CD8-positive, alpha-beta T cell (primary cell): ENCODE measurements at regions of chr18 and their contacts with region 1.

Region 1: GRCh38 chr18:52747869-52748268 is 407.9 kb downstream of the DCC start:
- DNase-seq: no peak
- ATAC-seq: no peak
- H3K4me3 ChIP-seq: no peak overlapping the region
- H3K4me3 Mint-ChIP-seq: no peak overlapping the region
- H3K27ac ChIP-seq: no peak overlapping the region
- H3K27ac Mint-ChIP-seq: no peak overlapping the region
- H3K4me1 ChIP-seq: no peaks in the 10 kb centered on the region
- H3K4me1 Mint-ChIP-seq: no peaks in the 10 kb centered on the region
- H3K27me3 ChIP-seq: no peaks in the 10 kb centered on the region
- H3K27me3 Mint-ChIP-seq: no peaks in the 10 kb centered on the region
- CTCF ChIP-seq: no peak

Region 2: DNA sequence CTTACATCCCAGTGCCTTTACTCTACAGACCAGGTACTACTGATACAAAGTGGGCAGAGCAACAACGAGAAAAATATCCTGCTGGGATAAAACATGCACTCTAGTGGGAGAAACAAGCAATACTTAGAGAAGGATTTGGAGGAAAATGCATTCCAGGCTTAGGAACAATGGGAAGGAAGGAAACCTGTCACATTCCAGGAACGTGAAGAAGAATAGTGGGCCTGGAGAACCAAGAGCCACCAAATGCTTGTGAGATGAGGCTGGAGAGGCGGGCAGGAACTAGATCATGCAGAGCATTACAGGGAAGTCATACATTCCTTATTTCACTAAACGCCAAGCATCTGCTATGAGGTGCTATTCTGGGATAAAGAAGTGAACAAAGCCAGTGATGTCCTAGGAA is 65.6 kb before region 1 on chr18:
- CTCF ChIA-PET with region 1: no interaction called
- POLR2A ChIA-PET with region 1: no interaction called
- intact Hi-C with region 1: loop called in 1 of 2 experiments (anchors 10 kb)
- DNase-seq: no peak
- ATAC-seq: no peak
- H3K4me3 ChIP-seq: no peak overlapping the region
- H3K4me3 Mint-ChIP-seq: no peak overlapping the region
- H3K27ac ChIP-seq: no peak overlapping the region
- H3K27ac Mint-ChIP-seq: no peak overlapping the region
- H3K4me1 ChIP-seq: no peaks in the 10 kb centered on the region
- H3K4me1 Mint-ChIP-seq: no peaks in the 10 kb centered on the region
- H3K27me3 ChIP-seq: no peaks in the 10 kb centered on the region
- H3K27me3 Mint-ChIP-seq: no peaks in the 10 kb centered on the region
- CTCF ChIP-seq: no peak